Activated CD4-positive, alpha-beta T cell treated with anti-CD3 and anti-CD28 coated beads, Interleukin-2, amount 10 ng/mL, durations not matched to agents 24 days and 14 days (primary cell): ENCODE measurements at regions of chr9 and their contacts with region 1.

Region 1: DNA sequence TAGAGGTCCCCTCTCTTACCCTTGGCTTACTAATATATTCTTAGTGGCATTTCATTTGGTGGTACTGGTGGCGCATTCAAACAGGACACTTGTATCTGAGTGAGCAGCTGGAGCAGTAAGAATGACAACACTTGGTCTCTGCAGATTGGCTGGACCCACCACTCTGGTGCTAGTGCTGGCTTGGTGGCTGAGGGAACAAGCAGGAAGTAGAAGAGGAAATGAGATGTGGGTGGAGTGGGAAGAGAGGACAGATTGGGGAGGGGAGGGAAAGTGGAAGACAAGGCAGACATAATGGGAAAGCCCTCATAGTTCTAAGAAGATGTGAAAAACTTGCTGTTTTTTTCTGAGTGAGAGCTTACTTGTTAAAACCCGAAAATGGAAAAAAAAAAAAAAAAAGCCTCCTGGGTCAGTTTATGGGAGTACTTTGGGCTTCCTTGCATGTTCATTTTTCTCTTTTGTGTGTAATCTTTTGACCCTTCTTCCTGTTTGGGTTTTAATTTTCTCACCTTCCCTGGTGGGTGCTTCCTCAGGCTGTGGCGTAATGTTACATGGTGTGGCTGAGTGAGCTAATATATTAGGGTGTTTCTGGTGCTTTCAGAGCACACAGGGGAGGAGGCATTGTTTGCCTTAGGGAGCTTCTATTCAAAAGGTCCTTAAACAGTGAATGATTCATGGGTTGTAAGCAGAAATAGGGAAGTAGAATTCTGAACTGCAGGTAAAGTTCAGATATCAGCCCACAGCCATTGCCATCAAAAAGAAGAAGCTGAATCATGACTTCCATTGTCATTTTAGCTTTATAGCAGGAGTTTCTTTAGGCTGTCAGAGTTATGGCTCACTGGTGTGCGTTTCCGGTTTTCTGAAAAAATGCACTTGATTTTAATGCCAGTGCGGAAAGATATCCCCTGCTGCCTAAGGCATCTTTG is 52.3 kb downstream of the TLE4 start:
- DNase-seq: peak; percentile 66
- H3K4me3 Mint-ChIP-seq: peak overlapping the region; percentile 57
- H3K27ac Mint-ChIP-seq: peak overlapping the region; percentile 88
- H3K4me1 Mint-ChIP-seq: peaks cover 20% of the 10 kb centered on the region
- H3K27me3 Mint-ChIP-seq: no peaks in the 10 kb centered on the region

Region 2: GRCh38 chr9:79390077-79390698 is 233.9 kb before region 1 on chr9:
- intact Hi-C with region 1: no loop called
- DNase-seq: no peak
- H3K4me3 Mint-ChIP-seq: no peak overlapping the region
- H3K27ac Mint-ChIP-seq: no peak overlapping the region
- H3K4me1 Mint-ChIP-seq: no peaks in the 10 kb centered on the region
- H3K27me3 Mint-ChIP-seq: no peaks in the 10 kb centered on the region

Region 3: GRCh38 chr9:79571309-79572031 is 52.6 kb before region 1 on chr9 and contains the start of gene TLE4:
- intact Hi-C with region 1: loop called (anchors 1 kb)
- DNase-seq: peak; percentile 100
- H3K4me3 Mint-ChIP-seq: no peak within 1 kb of the TSS
- H3K27ac Mint-ChIP-seq: peak within 1 kb of the TSS; percentile 66
- H3K4me1 Mint-ChIP-seq: peaks cover 28% of the 10 kb centered on the region
- H3K27me3 Mint-ChIP-seq: peaks cover 20% of the 10 kb centered on the region
- total RNA-seq, gene TLE4: 12.1 and 13.9 TPM in 2 replicates

Region 4: GRCh38 chr9:79583952-79584654 is 40.0 kb before region 1 on chr9:
- intact Hi-C with region 1: loop called (anchors 2 kb)
- DNase-seq: peak; percentile 70
- H3K4me3 Mint-ChIP-seq: peak overlapping the region; percentile 13
- H3K27ac Mint-ChIP-seq: no peak overlapping the region
- H3K4me1 Mint-ChIP-seq: peaks cover 37% of the 10 kb centered on the region
- H3K27me3 Mint-ChIP-seq: no peaks in the 10 kb centered on the region

Region 5: DNA sequence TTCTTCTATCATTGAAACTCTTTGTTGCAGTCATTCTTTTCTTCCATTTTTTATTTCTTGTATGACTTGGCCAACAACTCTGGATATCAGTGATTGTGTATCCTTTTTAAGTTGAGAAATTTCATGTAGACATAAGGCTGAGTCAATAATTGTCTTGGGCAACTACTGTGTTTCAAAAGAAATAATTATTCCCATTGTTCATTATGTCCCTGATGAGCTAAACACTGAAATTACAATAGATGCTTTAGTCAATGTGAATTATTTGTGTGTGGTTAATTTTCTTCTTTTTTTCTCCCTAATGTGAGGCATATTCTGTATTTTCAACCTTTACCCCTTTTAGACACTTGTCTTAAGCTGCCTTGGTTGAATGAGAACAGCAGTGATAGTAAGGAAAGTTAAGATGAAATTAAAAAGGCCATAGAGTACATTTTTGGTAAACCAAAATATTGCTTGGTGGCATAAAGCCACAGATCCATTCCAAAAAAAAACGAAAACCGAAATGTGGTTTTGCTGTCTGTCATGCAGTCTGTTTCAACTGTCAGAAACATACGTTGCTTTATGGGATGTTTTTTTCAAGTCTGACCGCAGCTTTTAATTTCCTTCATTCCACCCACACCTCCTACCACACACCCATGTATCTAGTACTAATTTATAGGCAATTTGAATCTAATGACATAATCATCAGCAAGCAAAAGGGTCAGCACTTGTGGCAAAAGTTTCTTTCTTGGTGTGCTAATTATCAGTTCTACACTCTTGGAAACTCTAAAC is 31.1 kb before region 1 on chr9:
- intact Hi-C with region 1: loop called (anchors 1 kb)
- DNase-seq: peak; percentile 74
- H3K4me3 Mint-ChIP-seq: peak overlapping the region; percentile 30
- H3K27ac Mint-ChIP-seq: peak overlapping the region; percentile 21
- H3K4me1 Mint-ChIP-seq: peaks cover 30% of the 10 kb centered on the region
- H3K27me3 Mint-ChIP-seq: peaks cover 30% of the 10 kb centered on the region

Region 6: DNA sequence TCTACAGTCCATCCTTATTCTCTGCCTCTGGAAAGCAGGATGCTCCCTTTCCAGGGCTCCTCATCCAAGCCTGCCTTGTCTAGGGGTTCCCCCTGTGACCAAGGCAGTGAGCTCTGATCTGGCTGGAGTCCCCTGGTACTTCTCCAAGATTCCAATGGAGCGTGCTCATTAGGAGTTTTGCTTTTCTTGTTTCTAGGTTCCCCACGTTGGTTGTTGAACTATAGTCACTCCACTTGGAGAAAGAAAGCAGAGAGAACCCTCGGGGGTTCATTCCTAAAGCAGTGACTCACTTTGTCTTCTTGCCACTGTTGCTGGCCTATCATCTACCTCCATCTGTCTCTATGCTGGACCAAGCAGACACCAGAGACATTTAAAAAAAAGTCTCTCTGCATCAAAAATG is 140.3 kb after region 1 on chr9:
- intact Hi-C with region 1: no loop called
- DNase-seq: no peak
- H3K4me3 Mint-ChIP-seq: no peak overlapping the region
- H3K27ac Mint-ChIP-seq: no peak overlapping the region
- H3K4me1 Mint-ChIP-seq: no peaks in the 10 kb centered on the region
- H3K27me3 Mint-ChIP-seq: no peaks in the 10 kb centered on the region